ENCODE measurements at regions of chr10 and their contacts with region 1.

Region 1: GRCh38 chr10:58531084-58531695 is 18.5 kb downstream of the BICC1 start:
- DNase-seq: peak; percentile 68
- H3K4me3 ChIP-seq: no peak overlapping the region
- H3K27ac ChIP-seq: no peak overlapping the region
- H3K4me1 ChIP-seq: peaks cover 4% of the 10 kb centered on the region
- H3K27me3 ChIP-seq: no peaks in the 10 kb centered on the region
- CTCF ChIP-seq: peak; percentile 77 to 82

Region 2: GRCh38 chr10:58641095-58641531 is 109.9 kb after region 1 on chr10:
- CTCF ChIA-PET with region 1: interaction called, 11 read pairs
- dilution Hi-C with region 1: no loop called
- in situ Hi-C with region 1: no loop called
- intact Hi-C with region 1: loop called (anchors 1 kb)
- DNase-seq: peak; percentile 95
- H3K4me3 ChIP-seq: peak overlapping the region in 1 of 3 experiments; percentile 1
- H3K27ac ChIP-seq: peak overlapping the region; percentile 81
- H3K4me1 ChIP-seq: peaks cover 34% of the 10 kb centered on the region
- H3K27me3 ChIP-seq: no peaks in the 10 kb centered on the region
- CTCF ChIP-seq: peak; percentile 8 to 46

Region 3: GRCh38 chr10:58775960-58776567 is 244.9 kb after region 1 on chr10:
- CTCF ChIA-PET with region 1: interaction called, 6 read pairs
- dilution Hi-C with region 1: no loop called
- in situ Hi-C with region 1: loop called in 1 of 2 experiments (anchors 25 kb)
- intact Hi-C with region 1: loop called (anchors 1 kb)
- DNase-seq: peak; percentile 71
- H3K4me3 ChIP-seq: no peak overlapping the region
- H3K27ac ChIP-seq: no peak overlapping the region
- H3K4me1 ChIP-seq: peaks cover 4% of the 10 kb centered on the region
- H3K27me3 ChIP-seq: no peaks in the 10 kb centered on the region
- CTCF ChIP-seq: no peak

Region 4: GRCh38 chr10:58952747-58953466 is 421.7 kb after region 1 on chr10:
- CTCF ChIA-PET with region 1: interaction called, 5 read pairs
- dilution Hi-C with region 1: no loop called
- in situ Hi-C with region 1: loop called in 1 of 2 experiments (anchors 25 kb)
- intact Hi-C with region 1: loop called (anchors 2 kb)
- DNase-seq: peak; percentile 35
- H3K4me3 ChIP-seq: no peak overlapping the region
- H3K27ac ChIP-seq: no peak overlapping the region
- H3K4me1 ChIP-seq: peaks cover 21% of the 10 kb centered on the region
- H3K27me3 ChIP-seq: no peaks in the 10 kb centered on the region
- CTCF ChIP-seq: peak; percentile 84

Region 5: GRCh38 chr10:59222788-59223187 is 691.6 kb after region 1 on chr10:
- CTCF ChIA-PET with region 1: no interaction called
- dilution Hi-C with region 1: no loop called
- in situ Hi-C with region 1: loop called in 1 of 2 experiments (anchors 25 kb)
- intact Hi-C with region 1: no loop called
- DNase-seq: no peak
- H3K4me3 ChIP-seq: no peak overlapping the region
- H3K27ac ChIP-seq: no peak overlapping the region
- H3K4me1 ChIP-seq: no peaks in the 10 kb centered on the region
- H3K27me3 ChIP-seq: no peaks in the 10 kb centered on the region
- CTCF ChIP-seq: no peak

Region 6: DNA sequence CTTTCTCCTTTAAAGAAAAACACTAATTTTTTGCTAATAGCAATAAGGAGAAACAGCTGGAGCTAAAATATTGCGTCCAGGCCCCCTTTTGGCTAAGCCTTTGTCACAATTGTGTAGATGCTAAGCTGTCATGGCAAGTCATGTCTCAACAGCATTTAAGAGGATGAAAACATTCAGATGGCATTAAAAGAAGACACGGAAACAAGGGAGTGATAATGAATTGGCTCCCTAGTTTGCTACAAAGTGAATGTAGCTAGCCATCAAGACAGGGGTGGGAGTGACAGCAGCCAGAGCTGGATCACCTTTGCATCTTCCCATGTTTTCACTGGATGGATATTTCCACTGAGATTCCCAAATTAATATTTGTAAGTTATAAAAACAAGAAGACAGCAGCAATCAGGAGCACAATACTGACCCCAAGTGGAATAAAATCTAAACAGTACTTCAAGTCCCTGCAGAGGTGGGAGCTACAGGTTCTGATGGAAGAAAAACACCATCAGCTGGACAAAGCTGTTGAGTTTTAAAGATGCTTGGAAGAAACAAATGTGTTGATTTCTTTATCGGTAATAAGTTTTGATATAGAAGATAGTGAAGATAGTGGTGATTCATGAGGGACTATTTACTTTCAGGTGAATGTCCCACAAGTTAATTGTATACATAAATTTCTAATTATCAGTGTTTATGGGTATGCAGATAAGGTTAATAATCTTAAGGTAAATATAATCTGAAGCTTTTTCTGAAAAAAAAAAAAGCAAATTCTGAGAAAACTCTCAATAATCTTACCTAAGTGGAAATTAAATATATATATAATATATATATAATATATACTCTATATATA is 1049.1 kb after region 1 on chr10:
- CTCF ChIA-PET with region 1: no interaction called
- dilution Hi-C with region 1: no loop called
- in situ Hi-C with region 1: no loop called
- intact Hi-C with region 1: loop called (anchors 10 kb)
- DNase-seq: no peak
- H3K4me3 ChIP-seq: no peak overlapping the region
- H3K27ac ChIP-seq: no peak overlapping the region
- H3K4me1 ChIP-seq: peaks cover 4% of the 10 kb centered on the region
- H3K27me3 ChIP-seq: no peaks in the 10 kb centered on the region
- CTCF ChIP-seq: peak; percentile 43 to 62